SK-N-SH (cell line): ENCODE measurements at regions of chr12 and their contacts with region 1.

Region 1: GRCh38 chr12:32455607-32456071 is 56.3 kb downstream of the FGD4 start:
- DNase-seq: peak; percentile 56
- H3K4me3 ChIP-seq: peak overlapping the region; percentile 31 to 53
- H3K27ac ChIP-seq: peak overlapping the region in 1 of 2 experiments; percentile 49; a peak in 2 of 4 replicates
- H3K4me1 ChIP-seq: peaks cover 0 to 25% of the 10 kb centered on the region in 2 experiments; a peak in 3 of 4 replicates
- H3K27me3 ChIP-seq: no peaks in the 10 kb centered on the region
- CTCF ChIP-seq: peak; percentile 84
- EP300 ChIP-seq: no peak
- RAD21 ChIP-seq: peak; percentile 90

Region 2: DNA sequence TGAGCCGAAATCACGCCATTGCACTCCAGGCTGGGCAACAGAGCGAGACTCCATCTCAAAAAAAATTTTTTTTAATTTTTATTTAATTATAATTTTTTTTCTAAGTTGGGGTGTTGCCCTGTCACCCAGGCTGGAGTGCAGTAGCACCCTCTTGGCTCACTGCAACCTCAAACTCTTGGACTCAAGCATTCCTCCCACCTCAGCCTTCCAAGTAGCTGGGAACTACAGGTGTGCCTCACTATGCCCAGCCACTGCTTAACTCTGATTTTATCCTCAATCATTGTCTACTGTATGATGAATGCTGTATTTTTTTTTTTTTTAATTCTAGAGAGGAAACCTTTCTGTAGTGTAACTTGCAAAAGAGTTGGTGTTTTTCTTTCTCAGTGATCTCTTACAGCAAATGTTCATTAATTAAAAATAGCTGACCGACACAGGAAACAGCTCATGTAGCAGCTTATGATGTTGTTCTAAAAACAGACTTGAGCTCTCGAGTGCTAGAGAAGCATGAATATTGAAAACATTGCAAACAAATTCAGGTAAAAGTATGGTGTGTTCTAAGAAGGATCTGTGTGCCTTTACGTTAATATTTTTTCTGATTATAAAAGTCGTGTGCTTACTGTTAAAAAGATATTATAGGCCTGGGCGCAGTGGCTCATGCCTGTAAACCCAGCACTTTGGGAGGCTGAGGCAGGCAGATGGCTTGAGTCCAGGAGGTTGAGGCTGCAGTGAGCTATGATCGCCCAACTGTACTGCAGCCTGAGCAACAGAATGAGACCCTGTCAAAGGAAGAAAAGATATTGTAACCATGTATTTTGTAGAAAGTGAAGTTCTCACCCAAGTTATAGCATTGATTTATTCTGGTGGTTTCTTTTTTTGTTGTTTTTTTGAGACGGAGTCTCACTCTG is 12.6 kb after region 1 on chr12:
- CTCF ChIA-PET with region 1: interaction called, 12 read pairs
- POLR2A ChIA-PET with region 1: no interaction called
- DNase-seq: no peak
- H3K4me3 ChIP-seq: no peak overlapping the region
- H3K27ac ChIP-seq: no peak overlapping the region
- H3K4me1 ChIP-seq: no peaks in the 10 kb centered on the region
- H3K27me3 ChIP-seq: no peaks in the 10 kb centered on the region
- CTCF ChIP-seq: no peak
- EP300 ChIP-seq: no peak
- RAD21 ChIP-seq: no peak